Esophagus squamous epithelium (tissue), 5 donors: ENCODE measurements at regions of chr5 and their contacts with region 1.

Region 1: GRCh38 chr5:32916648-32917047 is 205.5 kb downstream of the NPR3 start:
- DNase-seq: no peak
- H3K4me3 ChIP-seq: no peak overlapping the region
- H3K27ac ChIP-seq: no peak overlapping the region
- H3K4me1 ChIP-seq: no peaks in the 10 kb centered on the region
- H3K27me3 ChIP-seq: no peaks in the 10 kb centered on the region
- CTCF ChIP-seq: peak in 5 of 6 experiments; percentile 41 to 80 (median 59)
- POLR2A ChIP-seq: no peak

Region 2: GRCh38 chr5:32709781-32710549 is 206.7 kb before region 1 on chr5:
- intact Hi-C with region 1: loop called (anchors 10 kb)
- DNase-seq: no peak
- H3K4me3 ChIP-seq: peak overlapping the region; percentile 42 to 81 (median 72)
- H3K27ac ChIP-seq: peak overlapping the region; percentile 73 to 89 (median 80)
- H3K4me1 ChIP-seq: peaks cover 12 to 57% (median 16%) of the 10 kb centered on the region in 3 donors
- H3K27me3 ChIP-seq: peaks cover 0 to 51% (median 0%) of the 10 kb centered on the region in 4 donors
- CTCF ChIP-seq: peak; percentile 11 to 76 (median 59)
- POLR2A ChIP-seq: no peak

Region 3: GRCh38 chr5:32726086-32726557 is 190.5 kb before region 1 on chr5:
- intact Hi-C with region 1: no loop called
- DNase-seq: no peak
- H3K4me3 ChIP-seq: no peak overlapping the region
- H3K27ac ChIP-seq: no peak overlapping the region
- H3K4me1 ChIP-seq: no peaks in the 10 kb centered on the region
- H3K27me3 ChIP-seq: no peaks in the 10 kb centered on the region
- CTCF ChIP-seq: no peak
- POLR2A ChIP-seq: no peak